Calu3 (cell line): ENCODE measurements at regions of chr18 and their contacts with region 1.

Region 1: DNA sequence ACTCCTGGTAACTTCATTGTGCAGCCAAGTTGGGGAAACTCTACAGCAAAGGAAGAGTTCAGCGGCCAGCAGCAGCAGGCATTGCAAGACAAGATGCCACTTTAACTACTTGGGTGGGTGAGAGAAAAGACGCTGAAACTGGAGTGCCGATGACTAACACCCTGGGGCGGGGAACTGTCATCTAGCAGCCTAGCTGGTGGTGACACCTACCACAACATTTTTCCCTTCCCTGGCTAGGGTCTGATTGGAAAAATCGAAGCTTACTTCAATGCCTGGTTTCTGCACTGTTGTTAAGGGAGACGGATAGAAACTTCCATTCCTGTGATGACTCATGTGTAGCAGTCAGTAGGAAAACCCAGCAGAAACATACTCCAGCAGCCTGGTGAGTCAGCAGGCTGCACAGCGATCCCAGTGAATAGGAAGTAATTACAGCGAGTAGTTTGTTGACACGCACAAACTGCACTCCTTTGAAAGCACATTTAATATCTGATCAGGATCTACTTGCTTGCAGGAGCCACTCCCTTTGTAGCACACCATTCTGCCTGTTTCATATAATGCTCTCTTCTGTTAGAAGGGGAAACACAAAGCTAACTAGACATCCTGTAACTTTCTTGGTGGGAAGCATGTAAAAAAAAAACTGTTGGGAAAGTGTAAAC is 62.1 kb upstream of the MAPRE2 start:
- DNase-seq: peak; percentile 84
- H3K4me3 Mint-ChIP-seq: peak overlapping the region; percentile 89
- H3K27ac Mint-ChIP-seq: peak overlapping the region; percentile 83
- H3K4me1 Mint-ChIP-seq: peaks cover 36% of the 10 kb centered on the region
- H3K27me3 Mint-ChIP-seq: no peaks in the 10 kb centered on the region
- CTCF ChIP-seq: no peak

Region 2: GRCh38 chr18:34880882-34881834 is 97.9 kb before region 1 on chr18:
- CTCF ChIA-PET with region 1: no interaction called
- intact Hi-C with region 1: loop called (anchors 1 kb)
- DNase-seq: no peak
- H3K4me3 Mint-ChIP-seq: no peak overlapping the region
- H3K27ac Mint-ChIP-seq: no peak overlapping the region
- H3K4me1 Mint-ChIP-seq: no peaks in the 10 kb centered on the region
- H3K27me3 Mint-ChIP-seq: no peaks in the 10 kb centered on the region
- CTCF ChIP-seq: no peak

Region 3: DNA sequence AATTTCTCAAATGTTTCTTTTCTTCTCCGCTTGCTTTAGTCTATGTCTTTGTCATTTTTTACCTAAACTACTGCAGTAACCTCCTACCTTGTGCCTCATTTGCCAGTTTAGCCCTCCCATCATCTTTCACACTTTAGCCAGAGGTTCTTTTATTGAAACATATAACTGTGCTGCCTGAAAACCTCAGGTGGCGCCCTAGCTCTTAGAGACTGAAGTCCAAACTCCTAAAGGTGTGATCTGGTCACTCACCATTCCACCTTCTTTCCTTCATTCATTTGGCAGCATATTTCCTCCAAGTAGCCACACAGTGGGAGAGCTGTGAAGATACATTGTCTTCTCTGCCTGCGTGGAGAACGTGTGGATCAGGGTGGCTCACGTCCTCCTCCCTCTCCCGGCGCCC is 36.1 kb before region 1 on chr18:
- CTCF ChIA-PET with region 1: interaction called, 3 read pairs
- intact Hi-C with region 1: loop called (anchors 1 kb)
- DNase-seq: peak; percentile 30
- H3K4me3 Mint-ChIP-seq: peak overlapping the region; percentile 55
- H3K27ac Mint-ChIP-seq: peak overlapping the region; percentile 82
- H3K4me1 Mint-ChIP-seq: peaks cover 34% of the 10 kb centered on the region
- H3K27me3 Mint-ChIP-seq: no peaks in the 10 kb centered on the region
- CTCF ChIP-seq: no peak

Region 4: DNA sequence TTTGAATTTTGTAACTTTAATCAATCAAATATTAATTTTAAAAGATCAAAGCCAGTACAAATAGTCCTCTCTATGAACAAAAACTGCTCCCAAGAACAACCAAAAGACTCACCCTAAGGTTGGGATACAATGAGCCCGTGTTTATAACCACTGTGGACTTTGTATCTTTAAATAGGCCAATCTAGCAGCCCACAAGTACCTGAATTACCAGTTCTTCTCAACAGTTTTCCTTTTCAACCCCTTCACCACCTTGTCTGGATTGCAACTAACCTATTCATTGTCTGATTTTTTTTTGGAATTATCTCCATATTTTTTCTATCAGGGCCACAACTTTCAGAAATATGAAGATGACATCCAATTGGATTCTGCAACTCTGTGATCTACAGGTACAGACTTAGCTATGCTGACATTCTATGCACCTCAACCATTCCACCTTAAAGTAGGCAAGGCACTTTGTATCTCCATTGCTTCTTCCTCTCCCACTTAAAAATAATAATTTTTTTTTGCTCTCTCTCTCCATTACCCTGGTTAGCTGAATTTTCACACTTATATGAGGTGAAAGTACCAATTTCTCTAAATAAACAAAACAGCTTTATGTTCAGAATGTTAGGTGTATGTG is 19.8 kb before region 1 on chr18:
- CTCF ChIA-PET with region 1: interaction called, 6 read pairs
- intact Hi-C with region 1: loop called (anchors 1 kb)
- DNase-seq: peak; percentile 38
- H3K4me3 Mint-ChIP-seq: peak overlapping the region; percentile 50
- H3K27ac Mint-ChIP-seq: peak overlapping the region; percentile 75
- H3K4me1 Mint-ChIP-seq: peaks cover 42% of the 10 kb centered on the region
- H3K27me3 Mint-ChIP-seq: no peaks in the 10 kb centered on the region
- CTCF ChIP-seq: no peak

Region 5: DNA sequence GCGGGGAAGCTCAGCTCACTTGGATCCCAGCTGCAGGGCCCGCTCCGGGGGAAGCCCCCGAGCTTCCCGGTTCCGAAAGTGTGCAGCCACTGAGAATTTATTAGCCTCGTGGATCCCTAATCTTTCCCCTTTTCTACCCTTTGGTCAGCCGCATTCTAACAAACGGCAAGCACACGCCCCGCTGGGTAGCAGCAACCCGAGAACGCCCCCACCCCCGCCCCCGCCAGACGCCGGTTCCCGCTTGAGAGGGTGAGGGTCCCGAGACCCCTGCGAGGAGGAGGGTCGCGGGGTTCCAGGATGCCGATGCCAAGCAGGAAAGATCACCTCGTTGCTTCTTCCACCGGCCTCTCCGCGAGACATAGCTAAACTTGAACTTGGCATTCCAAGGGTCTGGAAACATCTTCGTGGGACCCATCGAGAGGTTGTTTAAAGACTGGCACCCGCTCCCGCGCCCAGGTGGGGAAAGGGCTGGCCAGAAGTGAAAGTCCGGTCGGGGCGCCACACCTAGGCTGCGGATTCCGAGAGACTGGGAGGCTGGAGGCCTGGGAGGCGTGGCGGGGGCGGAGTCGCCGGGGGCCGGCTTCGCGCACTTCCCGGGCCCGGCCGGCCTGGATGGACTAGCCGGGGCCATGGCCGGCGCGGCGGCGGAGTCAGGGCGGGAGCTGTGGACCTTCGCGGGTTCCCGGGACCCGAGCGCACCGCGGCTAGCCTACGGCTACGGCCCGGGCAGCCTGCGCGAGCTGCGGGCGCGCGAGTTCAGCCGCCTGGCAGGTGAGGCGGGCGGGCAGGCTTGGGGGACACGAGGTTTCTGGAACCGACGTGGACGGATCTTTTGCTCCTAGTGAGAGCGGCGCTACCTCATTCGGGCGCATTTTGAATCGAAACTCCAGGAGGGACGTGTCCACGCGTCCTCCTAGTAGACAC is 1208.1 kb after region 1 on chr18 and contains the start of gene MOCOS:
- CTCF ChIA-PET with region 1: no interaction called
- intact Hi-C with region 1: no loop called
- DNase-seq: peak; percentile 95
- H3K4me3 Mint-ChIP-seq: peak within 1 kb of the TSS; percentile 91
- H3K27ac Mint-ChIP-seq: peak within 1 kb of the TSS; percentile 58
- H3K4me1 Mint-ChIP-seq: peaks cover 35% of the 10 kb centered on the region
- H3K27me3 Mint-ChIP-seq: no peaks in the 10 kb centered on the region
- CTCF ChIP-seq: no peak
- total RNA-seq, gene MOCOS: 24.5 and 25.7 TPM in 2 replicates